ENCODE measurements at regions of chr15 and their contacts with region 1.

Region 1: DNA sequence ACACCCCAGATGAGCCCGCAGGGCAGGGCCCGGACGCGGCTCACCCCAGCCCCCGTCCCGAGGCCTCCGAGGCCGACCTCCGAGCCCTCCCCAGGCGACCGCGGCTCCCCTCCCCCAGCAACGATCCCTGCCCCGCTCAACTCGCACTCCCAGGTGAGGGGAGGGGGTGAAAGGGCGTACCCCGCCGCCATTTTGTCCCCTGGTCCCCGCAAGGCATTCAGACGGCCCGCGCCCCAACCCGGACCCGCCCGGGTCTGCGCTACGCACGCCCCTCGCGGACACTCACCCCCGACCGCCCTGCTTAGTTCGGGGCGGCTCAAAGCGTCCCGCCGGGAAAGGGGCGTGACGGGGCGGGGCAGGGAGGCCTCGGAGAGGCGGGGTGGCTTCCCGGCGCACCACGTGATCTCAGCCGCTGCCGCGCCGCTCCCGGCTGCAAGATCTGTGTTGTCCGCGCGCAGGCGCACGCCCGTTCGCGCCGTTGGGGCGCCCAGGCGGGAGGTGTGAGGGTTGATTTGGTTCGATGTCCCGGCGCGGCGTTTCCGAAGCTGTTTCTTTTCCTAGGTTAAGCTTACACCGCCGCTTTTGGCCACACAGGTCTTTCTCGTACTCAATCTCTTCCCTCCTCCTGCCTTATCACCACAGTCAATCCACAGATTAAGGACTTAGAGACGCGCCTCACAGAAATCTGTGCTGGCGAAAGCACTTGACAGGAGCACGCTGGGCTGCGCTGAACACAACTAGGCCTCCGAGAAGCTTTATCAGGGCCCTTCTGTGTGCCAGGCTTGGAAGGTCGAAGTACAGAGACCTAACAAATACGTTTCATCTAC is at the start of gene SCAPER:
- DNase-seq: peak; percentile 85 to 94 (median 89)
- ATAC-seq: peak; percentile 88
- H3K4me3 Mint-ChIP-seq: peak within 1 kb of the TSS; percentile 84 to 97 (median 92)
- H3K27ac Mint-ChIP-seq: peak within 1 kb of the TSS; percentile 93 to 98 (median 96)
- H3K4me1 Mint-ChIP-seq: peaks cover 7 to 37% (median 26%) of the 10 kb centered on the region in 4 donors
- H3K27me3 Mint-ChIP-seq: no peaks in the 10 kb centered on the region
- polyA plus RNA-seq, gene SCAPER: 12.3 to 17.7 (median 15.9) TPM

Region 2: GRCh38 chr15:76756381-76756780 is 148.8 kb before region 1 on chr15:
- POLR2A ChIA-PET with region 1: no interaction called
- DNase-seq: no peak
- ATAC-seq: no peak
- H3K4me3 Mint-ChIP-seq: no peak overlapping the region
- H3K27ac Mint-ChIP-seq: no peak overlapping the region
- H3K4me1 Mint-ChIP-seq: no peaks in the 10 kb centered on the region
- H3K27me3 Mint-ChIP-seq: no peaks in the 10 kb centered on the region

Region 3: DNA sequence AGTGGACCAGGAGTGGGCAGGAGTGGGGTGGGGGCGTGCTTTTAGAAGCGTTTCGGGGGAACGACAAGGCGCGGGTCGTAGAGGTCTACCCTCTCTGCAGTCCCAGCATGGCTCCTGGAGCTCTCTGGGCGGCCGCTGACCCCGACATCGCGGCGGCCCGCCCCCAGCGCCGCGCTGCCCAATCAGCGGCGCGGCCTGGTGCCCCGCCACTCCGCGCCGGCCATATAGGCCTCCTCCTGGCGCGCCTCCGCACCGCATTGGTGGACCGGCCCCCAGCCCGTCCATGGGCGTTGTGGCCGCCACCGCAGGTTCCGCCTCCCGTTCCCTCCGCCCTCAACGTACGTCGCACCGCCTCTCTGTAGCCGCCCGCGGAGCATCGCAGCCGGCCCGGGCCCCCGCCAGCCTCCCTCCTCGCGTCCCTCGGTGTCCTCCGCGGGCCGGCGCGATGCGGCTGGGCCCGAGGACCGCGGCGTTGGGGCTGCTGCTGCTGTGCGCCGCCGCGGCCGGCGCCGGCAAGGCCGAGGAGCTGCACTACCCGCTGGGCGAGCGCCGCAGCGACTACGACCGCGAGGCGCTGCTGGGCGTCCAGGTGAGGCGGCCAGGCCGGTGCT is 26.3 kb after region 1 on chr15 and contains the start of gene RCN2:
- POLR2A ChIA-PET with region 1: interaction called, 49 read pairs
- DNase-seq: peak; percentile 85 to 93 (median 90)
- ATAC-seq: peak; percentile 98 to 99
- H3K4me3 Mint-ChIP-seq: peak within 1 kb of the TSS; percentile 81 to 96 (median 92)
- H3K27ac Mint-ChIP-seq: peak within 1 kb of the TSS; percentile 74 to 97 (median 94)
- H3K4me1 Mint-ChIP-seq: peaks cover 15 to 41% (median 32%) of the 10 kb centered on the region in 4 donors
- H3K27me3 Mint-ChIP-seq: no peaks in the 10 kb centered on the region
- polyA plus RNA-seq, gene RCN2: 40.3 to 46.5 (median 43.6) TPM

Measured in naive thymus-derived CD8-positive, alpha-beta T cell (primary cell).